ENCODE measurements at regions of chr20 and their contacts with region 1.

Region 1: GRCh38 chr20:41003143-41003883 is 25.3 kb upstream of the TOP1 start:
- DNase-seq: peak; percentile 77
- H3K4me3 Mint-ChIP-seq: peak overlapping the region; percentile 45
- H3K27ac Mint-ChIP-seq: peak overlapping the region; percentile 90
- H3K4me1 Mint-ChIP-seq: peaks cover 22% of the 10 kb centered on the region
- H3K27me3 Mint-ChIP-seq: no peaks in the 10 kb centered on the region

Region 2: DNA sequence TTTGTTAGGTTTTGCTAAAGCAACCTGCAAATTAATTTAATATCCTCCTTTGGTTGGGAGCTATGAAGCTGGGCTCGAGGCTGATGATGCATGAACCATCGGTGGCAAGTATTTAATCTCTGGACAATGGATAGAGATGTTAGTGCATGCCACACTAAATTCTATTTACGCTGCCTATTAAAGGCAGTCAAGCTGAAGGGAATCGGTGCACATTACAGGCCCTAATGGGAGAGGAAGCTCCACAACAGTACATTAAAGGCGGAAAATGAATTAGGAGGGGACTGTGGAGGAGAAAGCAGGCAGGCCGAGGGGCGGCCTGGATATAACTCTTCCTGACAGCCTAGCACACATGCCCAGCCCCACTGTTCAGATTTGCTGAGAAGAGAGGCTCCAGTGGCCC is 181.9 kb before region 1 on chr20:
- CTCF ChIA-PET with region 1: no interaction called
- intact Hi-C with region 1: no loop called
- DNase-seq: no peak
- H3K4me3 Mint-ChIP-seq: no peak overlapping the region
- H3K27ac Mint-ChIP-seq: no peak overlapping the region
- H3K4me1 Mint-ChIP-seq: no peaks in the 10 kb centered on the region
- H3K27me3 Mint-ChIP-seq: peaks cover 6% of the 10 kb centered on the region

Region 3: GRCh38 chr20:41078329-41078728 is 75.0 kb after region 1 on chr20:
- CTCF ChIA-PET with region 1: no interaction called
- intact Hi-C with region 1: loop called (anchors 2 kb)
- DNase-seq: no peak
- H3K4me3 Mint-ChIP-seq: no peak overlapping the region
- H3K27ac Mint-ChIP-seq: peak overlapping the region; percentile 30
- H3K4me1 Mint-ChIP-seq: peaks cover 48% of the 10 kb centered on the region
- H3K27me3 Mint-ChIP-seq: no peaks in the 10 kb centered on the region

Measured in activated naive CD4-positive, alpha-beta T cell treated with anti-CD3 and anti-CD28 coated beads for 36 hours (primary cell).